B cell (primary cell): ENCODE measurements at regions of chr7 and their contacts with region 1.

Region 1: GRCh38 chr7:129163875-129164544 is 19.5 kb downstream of the TSPAN33 start:
- DNase-seq: peak; percentile 72
- ATAC-seq: no peak
- H3K4me3 ChIP-seq: no peak overlapping the region
- H3K4me3 Mint-ChIP-seq: no peak overlapping the region
- H3K27ac ChIP-seq: no peak overlapping the region
- H3K27ac Mint-ChIP-seq: peak overlapping the region; percentile 17
- H3K4me1 ChIP-seq: peaks cover 52 to 54% of the 10 kb centered on the region in 2 donors
- H3K4me1 Mint-ChIP-seq: peaks cover 74% of the 10 kb centered on the region
- H3K27me3 ChIP-seq: no peaks in the 10 kb centered on the region
- H3K27me3 Mint-ChIP-seq: no peaks in the 10 kb centered on the region
- CTCF ChIP-seq: peak; percentile 92

Region 2: DNA sequence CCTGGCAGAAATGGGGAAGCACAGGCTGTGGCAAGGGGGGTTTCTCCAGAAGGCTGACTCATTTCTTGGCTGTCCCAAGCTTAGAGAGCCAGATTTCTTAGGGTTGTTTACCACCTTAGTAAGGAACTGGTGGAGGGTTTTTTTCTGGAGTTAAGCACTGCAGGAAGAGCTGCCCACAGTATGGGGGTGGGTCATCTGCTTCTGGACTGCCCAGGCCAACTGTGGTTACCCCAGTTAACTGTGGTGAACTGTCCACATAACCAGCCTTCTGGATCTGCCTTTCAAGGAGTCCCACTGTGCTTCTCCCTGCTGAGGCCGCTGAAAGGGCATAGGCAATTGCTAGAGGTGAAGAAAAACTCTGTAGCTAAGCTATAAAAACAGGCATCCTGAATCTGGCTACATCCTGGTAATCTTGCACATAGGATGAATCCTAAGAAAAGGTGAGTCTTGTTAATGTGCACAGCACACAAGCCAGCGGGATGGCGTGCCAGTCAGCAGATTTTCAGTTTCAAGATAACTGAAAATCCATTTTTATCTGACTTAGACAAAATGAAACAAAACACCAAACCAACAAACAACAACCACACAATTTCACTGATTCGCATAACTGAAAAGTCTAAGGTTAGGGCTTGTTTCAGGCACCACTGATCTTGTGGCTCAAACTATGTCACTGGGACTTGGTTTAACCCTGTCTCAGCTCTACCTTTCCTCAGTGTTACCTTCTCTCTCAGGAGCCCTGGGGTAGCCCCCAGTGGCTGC is 41.1 kb before region 1 on chr7:
- CTCF ChIA-PET with region 1: interaction called, 15 read pairs
- POLR2A ChIA-PET with region 1: no interaction called
- intact Hi-C with region 1: loop called (anchors 1 kb)
- DNase-seq: peak; percentile 60
- ATAC-seq: peak; percentile 88
- H3K4me3 ChIP-seq: no peak overlapping the region
- H3K4me3 Mint-ChIP-seq: peak overlapping the region; percentile 61
- H3K27ac ChIP-seq: peak overlapping the region; percentile 53 to 68
- H3K27ac Mint-ChIP-seq: peak overlapping the region; percentile 87
- H3K4me1 ChIP-seq: peaks cover 21% of the 10 kb centered on the region in 2 donors
- H3K4me1 Mint-ChIP-seq: peaks cover 33% of the 10 kb centered on the region
- H3K27me3 ChIP-seq: no peaks in the 10 kb centered on the region
- H3K27me3 Mint-ChIP-seq: no peaks in the 10 kb centered on the region
- CTCF ChIP-seq: no peak

Region 3: GRCh38 chr7:129136887-129137642 is 26.9 kb before region 1 on chr7:
- CTCF ChIA-PET with region 1: interaction called, 26 read pairs
- POLR2A ChIA-PET with region 1: no interaction called
- intact Hi-C with region 1: no loop called
- DNase-seq: peak; percentile 82
- ATAC-seq: peak; percentile 88
- H3K4me3 ChIP-seq: peak overlapping the region in 4 of 5 experiments; percentile 4 to 62 (median 18)
- H3K4me3 Mint-ChIP-seq: peak overlapping the region; percentile 85
- H3K27ac ChIP-seq: peak overlapping the region; percentile 90 to 93
- H3K27ac Mint-ChIP-seq: peak overlapping the region; percentile 99
- H3K4me1 ChIP-seq: peaks cover 44 to 65% of the 10 kb centered on the region in 2 donors
- H3K4me1 Mint-ChIP-seq: peaks cover 55% of the 10 kb centered on the region
- H3K27me3 ChIP-seq: no peaks in the 10 kb centered on the region
- H3K27me3 Mint-ChIP-seq: no peaks in the 10 kb centered on the region
- CTCF ChIP-seq: no peak

Region 4: GRCh38 chr7:129144095-129144833 is 19.7 kb before region 1 on chr7 and contains the start of gene TSPAN33:
- CTCF ChIA-PET with region 1: interaction called, 168 read pairs
- POLR2A ChIA-PET with region 1: interaction called, 9 read pairs
- intact Hi-C with region 1: loop called (anchors 2 kb)
- DNase-seq: peak; percentile 78
- ATAC-seq: peak; percentile 75
- H3K4me3 ChIP-seq: peak within 1 kb of the TSS; percentile 84 to 100 (median 92)
- H3K4me3 Mint-ChIP-seq: peak within 1 kb of the TSS; percentile 99
- H3K27ac ChIP-seq: peak within 1 kb of the TSS; percentile 81 to 97
- H3K27ac Mint-ChIP-seq: peak within 1 kb of the TSS; percentile 99
- H3K4me1 ChIP-seq: peaks cover 44 to 59% of the 10 kb centered on the region in 2 donors
- H3K4me1 Mint-ChIP-seq: peaks cover 59% of the 10 kb centered on the region
- H3K27me3 ChIP-seq: no peaks in the 10 kb centered on the region
- H3K27me3 Mint-ChIP-seq: no peaks in the 10 kb centered on the region
- CTCF ChIP-seq: no peak
- total RNA-seq, gene TSPAN33: 111 and 117 TPM in 2 replicates

Region 5: GRCh38 chr7:129150199-129150996 is 13.6 kb before region 1 on chr7:
- CTCF ChIA-PET with region 1: interaction called, 168 read pairs
- POLR2A ChIA-PET with region 1: interaction called, 12 read pairs
- intact Hi-C with region 1: loop called (anchors 2 kb)
- DNase-seq: no peak
- ATAC-seq: no peak
- H3K4me3 ChIP-seq: no peak overlapping the region
- H3K4me3 Mint-ChIP-seq: peak overlapping the region; percentile 14
- H3K27ac ChIP-seq: peak overlapping the region; percentile 1 to 97
- H3K27ac Mint-ChIP-seq: peak overlapping the region; percentile 99
- H3K4me1 ChIP-seq: peaks cover 51 to 53% of the 10 kb centered on the region in 2 donors
- H3K4me1 Mint-ChIP-seq: peaks cover 77% of the 10 kb centered on the region
- H3K27me3 ChIP-seq: no peaks in the 10 kb centered on the region
- H3K27me3 Mint-ChIP-seq: no peaks in the 10 kb centered on the region
- CTCF ChIP-seq: no peak

Region 6: DNA sequence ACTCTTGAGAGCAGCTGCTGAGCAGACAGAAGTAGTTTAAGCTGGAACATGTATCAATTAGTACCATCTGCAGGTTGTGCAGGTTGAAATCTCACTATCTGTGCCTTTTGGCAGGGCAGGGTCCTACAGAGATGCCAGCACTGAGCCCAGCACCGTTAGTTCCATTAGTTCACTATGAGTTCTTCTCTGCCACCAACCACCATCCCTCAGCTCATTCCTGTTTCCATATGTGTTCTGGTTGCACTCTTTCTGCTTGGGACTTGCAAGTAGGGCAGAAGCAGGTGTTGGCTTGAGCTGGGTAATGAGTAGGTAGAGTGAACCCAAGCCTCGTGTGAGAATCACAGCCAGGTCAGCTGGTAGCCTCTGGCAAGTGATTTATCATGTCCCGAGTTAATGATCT is 27.3 kb after region 1 on chr7:
- CTCF ChIA-PET with region 1: interaction called, 12 read pairs
- POLR2A ChIA-PET with region 1: no interaction called
- intact Hi-C with region 1: loop called (anchors 1 kb)
- DNase-seq: no peak
- ATAC-seq: no peak
- H3K4me3 ChIP-seq: no peak overlapping the region
- H3K4me3 Mint-ChIP-seq: no peak overlapping the region
- H3K27ac ChIP-seq: no peak overlapping the region
- H3K27ac Mint-ChIP-seq: no peak overlapping the region
- H3K4me1 ChIP-seq: peaks cover 15 to 17% of the 10 kb centered on the region in 2 donors
- H3K4me1 Mint-ChIP-seq: peaks cover 22% of the 10 kb centered on the region
- H3K27me3 ChIP-seq: peaks cover 0 to 36% (median 18%) of the 10 kb centered on the region in 4 experiments
- H3K27me3 Mint-ChIP-seq: peaks cover 33% of the 10 kb centered on the region
- CTCF ChIP-seq: no peak

Region 7: DNA sequence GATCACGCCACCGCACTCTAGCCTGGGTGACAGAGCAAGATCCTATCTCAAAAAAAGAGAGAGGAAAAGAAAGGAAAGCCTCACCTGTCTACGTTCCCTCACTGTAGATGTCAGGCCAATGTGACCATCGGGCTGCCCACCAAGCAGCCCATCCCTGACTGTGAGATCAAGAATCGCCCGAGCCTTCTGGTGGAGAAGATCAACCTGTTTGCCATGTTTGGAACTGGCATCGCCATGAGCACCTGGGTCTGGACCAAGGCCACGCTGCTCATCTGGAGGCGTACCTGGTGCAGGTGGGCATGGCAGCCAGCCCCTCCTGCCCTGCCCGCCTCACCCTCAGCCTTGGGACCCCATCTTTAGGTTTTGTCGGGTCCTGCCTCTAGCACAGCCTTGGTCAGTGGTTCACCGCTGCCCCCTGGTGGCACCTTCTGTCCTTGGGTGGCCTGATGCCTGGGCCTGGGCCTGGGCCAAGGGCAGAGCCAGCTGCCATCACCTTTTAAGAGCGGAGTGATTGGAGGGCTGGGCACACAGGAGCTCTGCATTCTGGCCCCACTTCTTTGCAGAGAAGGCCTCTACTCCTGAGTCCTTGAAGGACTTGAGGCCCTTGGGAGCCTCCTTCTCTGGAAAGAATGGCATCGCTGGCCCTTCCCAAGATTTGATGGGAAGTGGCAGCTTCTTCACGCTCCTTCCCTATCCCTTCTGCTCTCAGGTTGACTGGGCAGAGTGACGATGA is 46.4 kb after region 1 on chr7:
- CTCF ChIA-PET with region 1: interaction called, 62 read pairs
- POLR2A ChIA-PET with region 1: no interaction called
- intact Hi-C with region 1: loop called (anchors 1 kb)
- DNase-seq: peak; percentile 82
- ATAC-seq: peak; percentile 90
- H3K4me3 ChIP-seq: no peak overlapping the region
- H3K4me3 Mint-ChIP-seq: no peak overlapping the region
- H3K27ac ChIP-seq: no peak overlapping the region
- H3K27ac Mint-ChIP-seq: no peak overlapping the region
- H3K4me1 ChIP-seq: no peaks in the 10 kb centered on the region
- H3K4me1 Mint-ChIP-seq: peaks cover 3% of the 10 kb centered on the region
- H3K27me3 ChIP-seq: no peaks in the 10 kb centered on the region
- H3K27me3 Mint-ChIP-seq: no peaks in the 10 kb centered on the region
- CTCF ChIP-seq: peak; percentile 84

Region 8: DNA sequence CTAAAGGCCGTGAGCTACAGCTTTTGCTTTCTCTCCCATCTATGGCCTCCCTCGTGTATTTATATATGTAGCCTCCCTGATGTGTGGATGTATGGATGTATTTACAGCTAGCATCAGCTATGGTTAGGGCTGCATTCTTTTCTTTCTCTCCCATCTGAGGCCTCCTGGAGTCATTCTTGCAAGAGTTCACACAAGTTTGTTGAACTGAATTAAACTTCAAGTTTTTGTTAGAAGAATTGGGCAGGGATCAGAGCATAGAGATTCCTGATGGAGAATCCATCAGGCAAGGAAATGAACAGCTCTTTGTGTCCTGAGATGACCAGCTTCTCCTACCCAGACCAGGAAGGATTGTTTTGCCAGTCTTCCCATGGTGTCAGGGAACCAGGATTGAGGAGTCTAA is 121.1 kb after region 1 on chr7:
- CTCF ChIA-PET with region 1: no interaction called
- POLR2A ChIA-PET with region 1: no interaction called
- intact Hi-C with region 1: no loop called
- DNase-seq: no peak
- ATAC-seq: no peak
- H3K4me3 ChIP-seq: no peak overlapping the region
- H3K4me3 Mint-ChIP-seq: no peak overlapping the region
- H3K27ac ChIP-seq: no peak overlapping the region
- H3K27ac Mint-ChIP-seq: no peak overlapping the region
- H3K4me1 ChIP-seq: no peaks in the 10 kb centered on the region
- H3K4me1 Mint-ChIP-seq: no peaks in the 10 kb centered on the region
- H3K27me3 ChIP-seq: no peaks in the 10 kb centered on the region
- H3K27me3 Mint-ChIP-seq: no peaks in the 10 kb centered on the region
- CTCF ChIP-seq: no peak